ENCODE measurements at regions of chr12 and their contacts with region 1.

Region 1: DNA sequence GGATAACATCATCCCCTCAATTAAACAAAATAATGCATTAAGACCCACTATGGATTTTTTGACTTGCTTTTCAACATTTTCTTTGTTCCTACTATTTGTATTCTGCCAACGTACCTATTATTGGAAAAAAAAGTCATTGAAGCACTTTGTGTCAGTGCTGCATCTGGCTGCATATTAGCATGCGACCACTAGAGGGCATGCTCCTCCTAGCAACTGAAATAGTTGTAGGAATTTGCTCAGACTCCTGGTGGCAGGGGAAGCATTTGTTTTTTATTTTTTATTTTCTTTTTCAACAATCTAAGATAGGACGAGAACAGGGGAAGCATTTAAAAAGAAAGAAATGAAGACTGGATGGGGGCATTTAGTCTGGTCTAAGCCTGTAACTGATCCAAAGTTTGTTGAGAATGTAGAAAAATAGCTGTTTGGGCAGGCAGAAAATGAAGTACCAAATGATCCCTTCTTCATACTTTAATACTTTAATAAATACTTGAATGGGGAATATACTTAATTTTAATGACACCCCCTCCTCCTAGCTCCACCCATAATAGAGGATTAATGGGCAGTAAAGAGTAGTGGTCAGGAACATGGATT is 14.5 kb upstream of the CLEC4A start:
- DNase-seq: peak; percentile 88
- ATAC-seq: peak; percentile 70
- H3K4me3 Mint-ChIP-seq: no peak overlapping the region
- H3K27ac Mint-ChIP-seq: no peak overlapping the region
- H3K4me1 Mint-ChIP-seq: peaks cover 6% of the 10 kb centered on the region
- H3K27me3 Mint-ChIP-seq: no peaks in the 10 kb centered on the region

Region 2: GRCh38 chr12:8088574-8088973 is 20.3 kb before region 1 on chr12:
- CTCF ChIA-PET with region 1: interaction called, 13 read pairs
- DNase-seq: peak; percentile 74
- ATAC-seq: peak; percentile 89
- H3K4me3 Mint-ChIP-seq: peak overlapping the region; percentile 72
- H3K27ac Mint-ChIP-seq: peak overlapping the region; percentile 93
- H3K4me1 Mint-ChIP-seq: peaks cover 48% of the 10 kb centered on the region
- H3K27me3 Mint-ChIP-seq: no peaks in the 10 kb centered on the region

Region 3: GRCh38 chr12:8226355-8226754 is 117.5 kb after region 1 on chr12:
- CTCF ChIA-PET with region 1: interaction called, 17 read pairs
- DNase-seq: no peak
- ATAC-seq: no peak
- H3K4me3 Mint-ChIP-seq: no peak overlapping the region
- H3K27ac Mint-ChIP-seq: no peak overlapping the region
- H3K4me1 Mint-ChIP-seq: peaks cover 3% of the 10 kb centered on the region
- H3K27me3 Mint-ChIP-seq: no peaks in the 10 kb centered on the region

Measured in activated CD8-positive, alpha-beta memory T cell treated with anti-CD3 and anti-CD28 coated beads, Interleukin-2, amount 10 ng/mL, durations not matched to agents 7 days and 5 days (primary cell).